Activated B cell treated with CpG ODN at 0.5 μM for 24 hours (primary cell): ENCODE measurements at regions of chr4 and their contacts with region 1.

Region 1: DNA sequence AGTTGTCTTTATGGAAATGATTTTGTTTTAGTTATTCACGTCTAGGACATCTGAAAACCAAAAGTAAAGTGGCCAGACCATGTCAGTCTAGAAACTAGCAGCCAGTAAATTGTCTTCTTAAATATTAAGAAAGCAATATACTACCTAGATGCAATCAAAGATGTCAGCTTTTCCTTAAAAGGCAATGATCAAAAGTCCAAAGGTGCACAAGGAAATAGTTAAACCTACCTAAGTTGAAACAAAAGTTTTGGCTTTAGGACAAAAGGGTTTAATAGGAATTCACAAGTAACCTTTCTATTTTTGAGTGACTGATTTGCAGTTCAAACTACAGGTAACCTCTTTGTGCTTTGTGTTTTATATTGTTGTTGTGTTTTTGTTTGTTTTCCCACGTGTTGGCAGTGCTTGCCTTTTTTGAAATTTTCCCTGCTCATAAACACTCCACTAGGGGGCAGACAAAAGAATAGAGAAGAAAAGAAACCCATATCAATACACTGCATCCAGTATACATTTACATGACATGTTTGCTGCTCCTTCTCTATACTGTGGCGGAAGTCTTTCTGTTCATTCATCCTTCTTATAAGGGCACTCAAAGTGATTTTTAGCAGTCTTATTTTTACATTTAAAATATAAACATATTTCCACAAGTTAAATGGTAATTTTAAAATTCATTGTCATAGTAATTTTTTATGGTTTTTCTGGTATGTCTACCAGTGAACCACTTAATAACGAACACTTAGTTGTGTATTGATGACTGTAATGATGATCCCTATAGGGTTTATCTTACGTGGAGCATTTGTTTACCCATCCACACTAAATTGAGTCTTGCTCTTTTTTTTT is 62.7 kb downstream of the GAB1 start:
- DNase-seq: no peak
- ATAC-seq: peak; percentile 56
- H3K4me3 Mint-ChIP-seq: no peak overlapping the region
- H3K27ac Mint-ChIP-seq: no peak overlapping the region
- H3K4me1 Mint-ChIP-seq: peaks cover 30% of the 10 kb centered on the region
- H3K27me3 Mint-ChIP-seq: no peaks in the 10 kb centered on the region
- CTCF ChIP-seq: no peak

Region 2: GRCh38 chr4:143375313-143376073 is 23.8 kb before region 1 on chr4:
- CTCF ChIA-PET with region 1: interaction called, 7 read pairs
- POLR2A ChIA-PET with region 1: interaction called, 4 read pairs
- intact Hi-C with region 1: loop called (anchors 1 kb)
- DNase-seq: no peak
- ATAC-seq: peak; percentile 61
- H3K4me3 Mint-ChIP-seq: no peak overlapping the region
- H3K27ac Mint-ChIP-seq: peak overlapping the region; percentile 86
- H3K4me1 Mint-ChIP-seq: peaks cover 68% of the 10 kb centered on the region
- H3K27me3 Mint-ChIP-seq: no peaks in the 10 kb centered on the region
- CTCF ChIP-seq: no peak

Region 3: GRCh38 chr4:143381171-143382118 is 17.9 kb before region 1 on chr4:
- CTCF ChIA-PET with region 1: interaction called, 7 read pairs
- POLR2A ChIA-PET with region 1: interaction called, 4 read pairs
- intact Hi-C with region 1: loop called (anchors 1 kb)
- DNase-seq: no peak
- ATAC-seq: peak; percentile 42
- H3K4me3 Mint-ChIP-seq: peak overlapping the region; percentile 33
- H3K27ac Mint-ChIP-seq: peak overlapping the region; percentile 75
- H3K4me1 Mint-ChIP-seq: peaks cover 76% of the 10 kb centered on the region
- H3K27me3 Mint-ChIP-seq: no peaks in the 10 kb centered on the region
- CTCF ChIP-seq: no peak

Region 4: GRCh38 chr4:143417679-143418403 is 18.5 kb after region 1 on chr4:
- CTCF ChIA-PET with region 1: interaction called, 7 read pairs
- POLR2A ChIA-PET with region 1: interaction called, 4 read pairs
- intact Hi-C with region 1: loop called (anchors 2 kb)
- DNase-seq: peak; percentile 35
- ATAC-seq: peak; percentile 96
- H3K4me3 Mint-ChIP-seq: peak overlapping the region; percentile 76
- H3K27ac Mint-ChIP-seq: peak overlapping the region; percentile 92
- H3K4me1 Mint-ChIP-seq: peaks cover 36% of the 10 kb centered on the region
- H3K27me3 Mint-ChIP-seq: no peaks in the 10 kb centered on the region
- CTCF ChIP-seq: no peak